PC-3 (cell line): ENCODE measurements at regions of chr20 and their contacts with region 1.

Region 1: DNA sequence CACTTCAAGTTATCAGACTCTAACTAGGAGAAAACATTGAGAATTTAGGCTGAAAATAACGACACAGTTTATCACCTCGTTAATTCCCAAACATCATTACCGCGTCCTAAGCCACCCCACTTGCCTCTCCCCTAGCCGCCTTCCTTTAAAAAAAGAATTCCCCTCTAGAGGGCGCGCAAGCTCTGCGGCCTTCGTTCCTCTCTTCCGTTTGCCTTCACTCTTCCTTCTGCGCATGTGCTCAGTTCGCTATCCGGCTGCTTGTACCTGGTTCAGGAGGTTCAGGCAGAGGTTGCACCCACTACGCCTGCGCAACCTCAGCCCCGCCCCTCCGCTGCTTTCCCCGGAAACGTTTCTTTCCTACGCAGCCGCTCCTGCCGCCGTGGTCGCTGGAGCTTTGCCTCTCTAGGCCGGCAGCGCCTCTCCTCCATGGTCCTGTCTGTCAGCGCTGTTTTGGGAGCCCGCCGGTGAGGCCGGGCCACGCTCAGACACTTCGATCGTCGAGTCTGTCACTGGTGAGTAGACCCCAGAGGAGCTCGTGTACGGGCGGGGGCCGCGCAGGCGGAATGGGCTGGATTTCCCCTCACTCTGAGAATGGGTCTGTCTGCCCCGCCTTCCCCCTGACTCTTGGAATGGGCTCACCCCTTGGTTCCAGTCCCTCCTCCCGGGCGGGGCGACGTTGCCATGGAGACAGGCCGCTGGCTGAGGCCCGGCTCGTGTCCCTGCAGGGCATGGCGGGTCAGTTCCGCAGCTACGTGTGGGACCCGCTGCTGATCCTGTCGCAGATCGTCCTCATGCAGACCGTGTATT is at the start of gene SYS1:
- DNase-seq: peak; percentile 99
- ATAC-seq: peak; percentile 87
- H3K4me3 ChIP-seq: peak within 1 kb of the TSS; percentile 85
- H3K27ac ChIP-seq: peak within 1 kb of the TSS; percentile 82
- H3K4me1 ChIP-seq: peaks cover 23% of the 10 kb centered on the region
- H3K27me3 ChIP-seq: no peaks in the 10 kb centered on the region
- CTCF ChIP-seq: peak; percentile 91
- total RNA-seq, gene SYS1: 32.5 and 45.2 TPM in 2 replicates

Region 2: DNA sequence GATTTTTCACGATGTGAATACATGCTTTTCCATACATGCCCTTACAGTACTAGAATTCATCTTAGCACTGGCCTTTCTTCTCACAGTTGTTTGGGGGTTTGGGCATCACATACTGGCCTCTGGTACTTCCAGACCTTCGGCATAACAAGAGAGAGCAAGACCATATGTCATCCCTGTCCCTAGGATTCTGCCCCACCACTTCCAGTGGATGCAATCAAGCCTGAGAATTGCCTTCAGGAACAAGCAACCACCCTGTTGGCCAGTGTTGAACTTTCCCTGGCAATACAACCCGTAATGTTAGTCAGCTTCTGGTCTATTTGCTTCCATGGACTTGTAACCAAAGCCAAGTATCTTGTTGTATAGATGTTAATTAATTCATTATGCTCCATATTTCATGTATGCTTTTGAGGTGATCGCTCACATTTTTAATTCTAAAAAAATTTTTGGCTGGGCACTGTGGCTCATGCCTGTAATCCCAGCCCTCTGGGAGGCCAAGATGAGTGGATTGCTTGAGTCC is 93.2 kb before region 1 on chr20:
- CTCF ChIA-PET with region 1: no interaction called
- POLR2A ChIA-PET with region 1: no interaction called
- intact Hi-C with region 1: no loop called
- DNase-seq: no peak
- ATAC-seq: no peak
- H3K4me3 ChIP-seq: no peak overlapping the region
- H3K27ac ChIP-seq: no peak overlapping the region
- H3K4me1 ChIP-seq: peaks cover 9% of the 10 kb centered on the region; the same call in 1 of the 2 replicates
- H3K27me3 ChIP-seq: peaks cover 4% of the 10 kb centered on the region; the same call in 1 of the 2 replicates
- CTCF ChIP-seq: no peak

Region 3: GRCh38 chr20:45337367-45338120 is 25.5 kb before region 1 on chr20:
- CTCF ChIA-PET with region 1: interaction called, 5 read pairs
- POLR2A ChIA-PET with region 1: interaction called, 3 read pairs
- intact Hi-C with region 1: loop called (anchors 2 kb)
- DNase-seq: peak; percentile 78
- ATAC-seq: peak; percentile 11
- H3K4me3 ChIP-seq: peak overlapping the region; percentile 15; the same call in 1 of the 2 replicates
- H3K27ac ChIP-seq: peak overlapping the region; percentile 95
- H3K4me1 ChIP-seq: peaks cover 70% of the 10 kb centered on the region
- H3K27me3 ChIP-seq: no peaks in the 10 kb centered on the region
- CTCF ChIP-seq: no peak

Region 4: GRCh38 chr20:45373353-45374100 is 10.5 kb after region 1 on chr20:
- CTCF ChIA-PET with region 1: interaction called, 16 read pairs
- POLR2A ChIA-PET with region 1: no interaction called
- intact Hi-C with region 1: no loop called
- DNase-seq: peak; percentile 93
- ATAC-seq: peak; percentile 94
- H3K4me3 ChIP-seq: peak overlapping the region; percentile 23; the same call in 1 of the 2 replicates
- H3K27ac ChIP-seq: no peak overlapping the region
- H3K4me1 ChIP-seq: no peaks in the 10 kb centered on the region; the same call in 1 of the 2 replicates
- H3K27me3 ChIP-seq: no peaks in the 10 kb centered on the region
- CTCF ChIP-seq: peak; percentile 97

Region 5: DNA sequence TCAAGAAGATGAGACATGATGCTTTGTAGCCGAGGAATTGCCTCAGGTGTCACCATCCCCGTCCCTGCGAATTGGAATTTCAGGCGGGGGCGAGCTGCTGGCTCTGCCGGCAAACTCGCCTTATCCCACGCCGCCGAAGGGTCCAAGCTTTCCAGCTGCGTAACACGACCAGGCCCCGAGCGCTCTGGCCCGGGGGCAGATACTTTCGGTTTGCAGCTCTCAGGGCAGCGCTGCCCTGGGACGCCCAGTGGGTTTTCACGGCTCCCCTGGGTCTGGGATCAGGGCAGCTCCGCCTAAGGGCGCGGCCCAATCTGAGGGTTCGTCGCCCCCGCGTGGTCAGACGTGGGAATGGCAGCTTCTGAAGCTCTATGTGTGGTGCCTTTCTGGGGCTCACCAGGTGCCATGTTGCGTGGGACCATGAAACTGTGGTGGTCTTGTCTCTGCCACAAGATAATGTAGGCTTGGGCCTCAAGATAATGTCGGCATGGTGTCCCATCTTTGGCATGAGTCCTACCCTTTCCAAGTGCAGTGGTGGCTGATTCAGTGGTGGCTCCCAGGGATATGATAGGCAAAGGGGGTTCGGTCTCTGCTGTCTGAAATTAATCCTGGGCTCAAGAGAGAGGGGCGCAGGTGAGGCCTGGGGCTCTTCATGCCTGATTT is 73.9 kb after region 1 on chr20:
- CTCF ChIA-PET with region 1: interaction called, 14 read pairs
- POLR2A ChIA-PET with region 1: no interaction called
- intact Hi-C with region 1: loop called (anchors 1 kb)
- DNase-seq: peak; percentile 92
- ATAC-seq: peak; percentile 98
- H3K4me3 ChIP-seq: peak overlapping the region; percentile 75
- H3K27ac ChIP-seq: no peak overlapping the region
- H3K4me1 ChIP-seq: peaks cover 13% of the 10 kb centered on the region
- H3K27me3 ChIP-seq: no peaks in the 10 kb centered on the region
- CTCF ChIP-seq: peak; percentile 98

Region 6: DNA sequence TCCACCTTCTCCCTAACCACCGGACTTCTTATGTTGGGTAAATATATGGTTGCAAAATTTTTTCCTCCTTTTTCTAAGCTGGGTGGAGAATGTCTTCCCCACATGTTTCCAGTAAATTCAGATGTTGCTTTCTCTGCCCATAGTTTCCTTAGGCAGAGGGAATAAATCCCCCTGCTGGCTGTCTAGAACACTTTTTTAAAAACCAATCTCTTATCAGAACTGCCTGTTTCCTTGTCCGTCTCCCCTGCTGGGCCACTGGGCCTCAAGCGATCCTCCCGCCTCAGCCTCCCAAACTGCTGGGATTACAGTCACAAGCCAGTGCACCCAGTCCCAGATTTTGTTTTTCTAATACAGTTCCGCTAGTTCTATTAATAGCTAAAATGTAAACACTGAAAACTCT is 96.6 kb after region 1 on chr20:
- CTCF ChIA-PET with region 1: no interaction called
- POLR2A ChIA-PET with region 1: no interaction called
- intact Hi-C with region 1: no loop called
- DNase-seq: peak; percentile 41
- ATAC-seq: peak; percentile 71
- H3K4me3 ChIP-seq: no peak overlapping the region
- H3K27ac ChIP-seq: no peak overlapping the region
- H3K4me1 ChIP-seq: no peaks in the 10 kb centered on the region
- H3K27me3 ChIP-seq: peaks cover 18% of the 10 kb centered on the region
- CTCF ChIP-seq: peak; percentile 58; the same call in 1 of the 2 replicates